Transverse colon (tissue), 4 donors: ENCODE measurements at regions of chr6 and their contacts with region 1.

Region 1: DNA sequence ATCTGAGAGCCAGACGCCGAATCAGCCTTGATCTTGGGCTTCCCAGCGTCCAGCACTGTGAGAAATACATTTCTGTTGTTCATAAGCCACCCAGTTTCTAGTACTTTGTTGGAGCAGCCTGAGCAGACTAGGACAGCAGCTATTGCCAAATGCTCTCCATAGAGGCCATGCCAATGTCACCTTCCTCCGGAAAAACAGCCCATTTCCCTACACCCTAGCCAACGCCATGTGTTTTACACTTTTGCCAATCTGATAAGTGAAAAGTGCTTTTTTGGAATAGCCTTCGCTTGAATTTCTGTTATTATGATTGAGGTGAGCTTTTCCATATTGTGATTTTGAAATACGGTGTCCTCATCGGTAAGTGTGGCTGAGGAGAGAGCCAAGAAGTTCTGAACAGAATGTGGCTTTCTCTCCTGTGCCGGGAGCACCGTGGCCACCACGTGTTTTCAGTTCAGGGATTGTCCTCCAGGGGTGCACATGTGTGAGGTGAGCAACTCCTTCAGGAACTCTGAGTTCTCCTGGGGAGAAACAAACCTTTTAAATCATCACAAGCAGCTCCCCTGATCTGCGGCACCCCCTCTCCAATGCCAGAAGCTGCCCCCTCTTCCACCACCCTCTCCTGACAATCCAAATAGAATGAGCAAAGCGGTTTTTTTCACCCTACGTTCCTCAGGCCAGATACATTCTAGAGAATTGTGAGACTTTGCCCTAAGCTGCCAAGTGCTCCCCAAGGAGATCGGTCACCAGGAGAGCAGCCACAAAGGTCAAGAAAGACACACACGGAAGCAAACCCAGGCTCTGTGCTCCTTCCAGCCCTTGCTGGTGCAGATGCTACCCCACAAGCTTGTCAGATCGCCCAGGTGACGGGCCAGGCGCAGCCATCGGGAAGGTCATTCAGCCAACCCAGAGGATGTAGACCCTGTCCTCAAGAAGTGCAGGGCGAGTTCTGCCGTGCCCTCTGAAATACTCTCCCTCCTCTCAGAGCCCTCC is 36.0 kb downstream of the TAF8 start:
- DNase-seq: no peak
- H3K4me3 ChIP-seq: no peak overlapping the region
- H3K27ac ChIP-seq: no peak overlapping the region
- H3K4me1 ChIP-seq: no peaks in the 10 kb centered on the region
- H3K27me3 ChIP-seq: no peaks in the 10 kb centered on the region
- CTCF ChIP-seq: peak in 3 of 5 experiments; percentile 7 to 28 (median 22)
- EP300 ChIP-seq: no peak
- POLR2A ChIP-seq: no peak

Region 2: DNA sequence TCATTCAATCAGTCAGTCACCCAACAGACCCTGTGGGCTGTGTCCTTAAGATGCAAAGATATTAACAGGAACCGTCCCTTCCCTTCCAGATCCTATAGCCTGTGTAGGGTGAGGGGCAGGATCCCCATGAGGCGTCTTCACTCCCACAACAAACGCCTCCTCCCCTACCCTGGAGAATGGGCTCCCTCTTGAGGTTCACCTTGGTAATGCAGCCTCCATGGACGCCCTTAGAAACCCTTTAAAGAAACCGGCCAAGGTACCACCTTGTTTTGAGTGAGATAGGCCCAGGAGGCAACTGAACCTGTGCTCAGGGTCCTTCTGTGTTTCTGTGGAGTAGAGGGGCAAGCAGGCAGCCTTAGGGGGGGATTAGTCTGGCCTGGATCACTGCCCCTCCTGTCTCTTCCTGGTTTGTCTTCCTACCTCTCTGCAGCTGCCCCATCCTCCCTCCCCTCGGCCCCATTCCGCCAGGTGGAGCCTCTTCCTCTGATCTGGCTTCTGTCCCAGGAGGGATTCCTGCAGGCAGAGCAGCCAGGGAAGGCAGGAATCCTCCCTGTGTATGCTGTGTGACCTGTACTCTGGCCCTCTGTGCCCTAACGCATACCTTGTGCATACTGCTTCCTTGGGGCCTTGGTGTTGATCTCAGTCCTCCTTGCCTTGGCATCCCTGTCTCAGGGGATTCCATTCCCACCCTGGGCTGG is 80.3 kb after region 1 on chr6:
- in situ Hi-C with region 1: loop called in 1 of 4 experiments (anchors 5 kb)
- intact Hi-C with region 1: no loop called
- DNase-seq: peak; percentile 77
- H3K4me3 ChIP-seq: no peak overlapping the region
- H3K27ac ChIP-seq: peak overlapping the region in 1 of 4 donors; percentile 13
- H3K4me1 ChIP-seq: peaks cover 0 to 4% (median 1%) of the 10 kb centered on the region in 4 donors
- H3K27me3 ChIP-seq: no peaks in the 10 kb centered on the region
- CTCF ChIP-seq: peak; percentile 96 to 98 (median 97)
- EP300 ChIP-seq: no peak
- POLR2A ChIP-seq: no peak